ENCODE measurements at regions of chr22 and their contacts with region 1.

Region 1: DNA sequence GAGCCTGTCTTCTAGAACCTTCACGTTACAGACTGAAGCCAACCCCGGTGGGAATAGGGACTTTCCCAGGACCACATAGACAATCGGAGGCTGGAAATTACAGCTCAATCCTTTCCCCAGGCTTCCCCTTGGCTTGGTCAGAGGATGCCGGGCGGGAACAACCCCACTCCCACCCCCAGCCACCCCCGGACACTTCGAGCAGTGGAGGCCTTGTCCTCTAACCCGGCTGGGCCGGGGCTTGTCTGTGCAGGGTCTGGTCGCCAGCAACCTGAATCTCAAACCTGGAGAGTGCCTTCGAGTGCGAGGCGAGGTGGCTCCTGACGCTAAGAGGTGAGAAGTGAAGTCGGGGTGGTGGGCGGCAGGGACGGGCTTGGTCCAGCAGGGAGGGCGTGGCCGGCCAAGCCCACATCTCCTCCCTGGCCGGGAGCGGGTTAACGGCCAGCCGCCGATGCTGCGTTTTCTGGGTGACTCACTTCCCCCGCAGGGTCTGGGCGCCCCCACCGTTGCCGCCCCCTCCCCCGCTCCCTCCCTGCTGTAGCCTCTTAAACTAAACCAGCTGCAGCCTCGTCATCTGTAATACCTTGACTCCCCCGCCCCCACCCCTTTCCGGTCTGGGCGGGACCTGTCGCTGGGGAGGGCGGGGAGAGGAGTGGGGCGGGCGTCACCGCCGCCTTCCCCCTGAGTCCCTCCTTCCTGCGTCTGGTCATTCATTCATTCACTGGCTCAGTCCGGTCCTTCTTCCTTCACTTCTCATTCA is 1.5 kb downstream of the LGALS1 start:
- DNase-seq: peak; percentile 90 to 97 (median 94)
- ATAC-seq: peak; percentile 83
- H3K4me3 ChIP-seq: peak overlapping the region; percentile 88
- H3K4me3 Mint-ChIP-seq: peak overlapping the region; percentile 89
- H3K27ac ChIP-seq: peak overlapping the region; percentile 91 to 99
- H3K27ac Mint-ChIP-seq: peak overlapping the region; percentile 96
- H3K4me1 ChIP-seq: peaks cover 72% of the 10 kb centered on the region
- H3K4me1 Mint-ChIP-seq: peaks cover 58% of the 10 kb centered on the region
- H3K27me3 ChIP-seq: no peaks in the 10 kb centered on the region
- H3K27me3 Mint-ChIP-seq: no peaks in the 10 kb centered on the region
- CTCF ChIP-seq: no peak

Region 2: DNA sequence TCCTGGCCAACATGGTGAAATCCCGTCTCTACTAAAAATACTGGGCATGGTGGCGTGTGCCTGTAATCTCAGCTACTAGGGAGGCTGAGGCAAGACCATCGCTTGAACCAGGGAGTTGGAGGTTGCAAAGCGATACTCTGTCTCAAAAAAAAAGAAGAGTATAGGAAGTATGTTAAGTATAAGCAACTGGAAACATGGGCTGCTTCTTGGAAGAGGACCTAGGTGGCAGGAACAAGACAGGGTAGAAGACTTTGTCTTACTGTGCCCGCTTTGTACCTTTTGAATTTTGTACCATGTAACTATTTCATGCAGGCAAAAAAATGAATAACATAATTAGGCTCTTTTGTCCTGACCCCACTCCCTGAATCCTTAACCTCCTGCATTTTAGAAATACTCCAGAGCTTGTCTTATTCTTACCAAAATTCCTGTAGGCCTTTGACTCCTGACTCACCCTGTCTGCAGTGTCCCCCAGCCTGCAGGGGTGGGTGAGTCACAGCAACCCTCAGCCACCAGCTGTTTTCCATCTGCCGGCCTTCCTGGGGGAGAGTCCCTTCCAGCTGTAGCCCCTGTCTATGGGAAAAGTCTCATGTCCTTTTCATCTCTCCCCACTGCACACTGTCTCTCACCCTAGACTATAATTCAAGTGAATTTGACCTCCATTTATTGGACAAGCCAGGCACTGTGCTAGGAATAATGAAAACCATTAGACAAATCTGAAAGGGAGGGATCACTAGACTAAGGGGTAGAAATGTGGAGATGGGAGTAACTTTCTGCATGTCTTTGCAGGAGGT is 1237.2 kb before region 1 on chr22:
- CTCF ChIA-PET with region 1: no interaction called
- POLR2A ChIA-PET with region 1: no interaction called
- intact Hi-C with region 1: no loop called
- DNase-seq: peak in 2 of 14 experiments; percentile 26 to 35
- ATAC-seq: no peak
- H3K4me3 ChIP-seq: no peak overlapping the region
- H3K4me3 Mint-ChIP-seq: no peak overlapping the region
- H3K27ac ChIP-seq: no peak overlapping the region
- H3K27ac Mint-ChIP-seq: no peak overlapping the region
- H3K4me1 ChIP-seq: peaks cover 36% of the 10 kb centered on the region
- H3K4me1 Mint-ChIP-seq: peaks cover 39% of the 10 kb centered on the region
- H3K27me3 ChIP-seq: no peaks in the 10 kb centered on the region
- H3K27me3 Mint-ChIP-seq: no peaks in the 10 kb centered on the region
- CTCF ChIP-seq: no peak

Region 3: GRCh38 chr22:37633625-37634416 is 43.1 kb before region 1 on chr22:
- CTCF ChIA-PET with region 1: interaction called, 171 read pairs
- POLR2A ChIA-PET with region 1: interaction called, 29 read pairs
- intact Hi-C with region 1: no loop called
- DNase-seq: peak in 11 of 14 experiments; percentile 44 to 81 (median 52)
- ATAC-seq: peak; percentile 61
- H3K4me3 ChIP-seq: peak overlapping the region; percentile 34
- H3K4me3 Mint-ChIP-seq: peak overlapping the region; percentile 88
- H3K27ac ChIP-seq: peak overlapping the region; percentile 65 to 86
- H3K27ac Mint-ChIP-seq: peak overlapping the region; percentile 94
- H3K4me1 ChIP-seq: peaks cover 85% of the 10 kb centered on the region
- H3K4me1 Mint-ChIP-seq: peaks cover 68% of the 10 kb centered on the region
- H3K27me3 ChIP-seq: no peaks in the 10 kb centered on the region
- H3K27me3 Mint-ChIP-seq: no peaks in the 10 kb centered on the region
- CTCF ChIP-seq: no peak

Region 4: GRCh38 chr22:37643225-37643847 is 33.6 kb before region 1 on chr22:
- CTCF ChIA-PET with region 1: interaction called, 171 read pairs
- POLR2A ChIA-PET with region 1: interaction called, 42 read pairs
- intact Hi-C with region 1: loop called (anchors 1 kb)
- DNase-seq: peak; percentile 73 to 94 (median 87)
- ATAC-seq: peak; percentile 68
- H3K4me3 ChIP-seq: no peak overlapping the region
- H3K4me3 Mint-ChIP-seq: peak overlapping the region; percentile 85
- H3K27ac ChIP-seq: no peak overlapping the region
- H3K27ac Mint-ChIP-seq: peak overlapping the region; percentile 80
- H3K4me1 ChIP-seq: peaks cover 65% of the 10 kb centered on the region
- H3K4me1 Mint-ChIP-seq: peaks cover 35% of the 10 kb centered on the region
- H3K27me3 ChIP-seq: no peaks in the 10 kb centered on the region
- H3K27me3 Mint-ChIP-seq: no peaks in the 10 kb centered on the region
- CTCF ChIP-seq: peak; percentile 91

Measured in CD4-positive, alpha-beta T cell (primary cell).